ENCODE measurements at regions of chr4 and their contacts with region 1.

Region 1: GRCh38 chr4:48801734-48802133 is 21.7 kb upstream of the FRYL start:
- DNase-seq: peak in 1 of 2 donors; percentile 75
- ATAC-seq: peak; percentile 55 to 94 (median 84)
- H3K4me3 ChIP-seq: no peak overlapping the region
- H3K27ac ChIP-seq: peak overlapping the region in 9 of 10 donors; percentile 38 to 87 (median 69)
- H3K4me1 ChIP-seq: peaks cover 0 to 57% (median 20%) of the 10 kb centered on the region in 9 donors
- H3K27me3 ChIP-seq: no peaks in the 10 kb centered on the region
- CTCF ChIP-seq: no peak

Region 2: GRCh38 chr4:48681856-48682255 is 119.9 kb before region 1 on chr4:
- intact Hi-C with region 1: no loop called
- DNase-seq: no peak
- ATAC-seq: peak in 4 of 8 donors; percentile 44 to 70 (median 58)
- H3K4me3 ChIP-seq: no peak overlapping the region
- H3K27ac ChIP-seq: peak overlapping the region in 1 of 10 donors; percentile 19
- H3K4me1 ChIP-seq: peaks cover 0 to 45% (median 17%) of the 10 kb centered on the region in 9 donors
- H3K27me3 ChIP-seq: no peaks in the 10 kb centered on the region
- CTCF ChIP-seq: peak; percentile 25 to 74 (median 47)

Region 3: DNA sequence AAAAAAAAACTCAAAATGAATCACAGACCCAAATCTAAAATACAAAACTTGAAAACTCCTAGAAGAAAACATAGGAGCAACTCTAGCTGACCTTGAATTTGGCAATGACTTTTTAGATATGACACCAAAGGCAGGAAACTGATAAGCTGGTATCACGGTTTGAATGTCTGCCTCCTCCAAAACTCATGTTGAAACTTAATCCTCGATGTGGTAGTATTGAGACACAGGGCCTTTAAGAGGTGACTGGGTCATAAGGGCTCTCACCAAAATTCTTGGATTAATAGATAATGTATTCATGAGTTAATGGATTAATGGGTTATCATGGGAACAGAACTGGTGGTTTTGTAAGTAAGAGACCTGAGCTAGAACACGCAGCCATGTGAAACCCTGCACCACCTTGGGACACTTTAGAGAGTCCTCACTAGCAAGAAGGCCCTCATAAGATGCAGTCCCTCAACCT is 62.1 kb before region 1 on chr4:
- intact Hi-C with region 1: loop called in 1 of 10 experiments (anchors 2 kb)
- DNase-seq: no peak
- ATAC-seq: no peak
- H3K4me3 ChIP-seq: no peak overlapping the region
- H3K27ac ChIP-seq: no peak overlapping the region
- H3K4me1 ChIP-seq: peaks cover 0 to 42% (median 17%) of the 10 kb centered on the region in 9 donors
- H3K27me3 ChIP-seq: no peaks in the 10 kb centered on the region
- CTCF ChIP-seq: no peak

Region 4: DNA sequence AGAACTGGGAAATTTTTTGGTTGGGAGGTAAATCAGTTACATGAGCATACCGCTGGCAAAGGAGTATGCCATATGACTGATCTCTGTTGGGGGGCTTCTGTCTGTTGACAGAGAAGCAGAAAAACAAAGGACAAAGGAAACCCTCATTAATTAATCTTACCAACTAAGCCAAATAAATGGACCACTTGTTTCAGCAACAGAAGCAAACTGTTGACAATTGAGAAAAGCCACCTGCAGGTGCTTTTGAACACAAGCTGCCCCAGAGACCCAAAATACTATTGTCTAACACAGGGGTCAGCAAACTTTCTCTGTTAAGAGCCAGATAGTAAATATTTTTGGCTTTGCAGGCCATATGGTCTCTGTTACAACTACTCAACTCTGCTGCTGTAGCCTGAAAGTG is 14.7 kb before region 1 on chr4:
- intact Hi-C with region 1: no loop called
- DNase-seq: no peak
- ATAC-seq: no peak
- H3K4me3 ChIP-seq: no peak overlapping the region
- H3K27ac ChIP-seq: no peak overlapping the region
- H3K4me1 ChIP-seq: peaks cover 0 to 2% (median 0%) of the 10 kb centered on the region in 9 donors
- H3K27me3 ChIP-seq: no peaks in the 10 kb centered on the region
- CTCF ChIP-seq: no peak

Region 5: GRCh38 chr4:48906206-48907173 is 104.8 kb after region 1 on chr4 and contains the start of gene OCIAD2:
- intact Hi-C with region 1: no loop called
- DNase-seq: peak; percentile 50 to 63
- ATAC-seq: peak; percentile 81 to 92 (median 88)
- H3K4me3 ChIP-seq: peak within 1 kb of the TSS; percentile 40 to 84 (median 70)
- H3K27ac ChIP-seq: peak within 1 kb of the TSS in 9 of 10 donors; percentile 46 to 80 (median 71)
- H3K4me1 ChIP-seq: peaks cover 0 to 19% (median 12%) of the 10 kb centered on the region in 9 donors
- H3K27me3 ChIP-seq: no peaks in the 10 kb centered on the region
- CTCF ChIP-seq: peak in 4 of 9 donors; percentile 25 to 46 (median 36)
- total RNA-seq, gene OCIAD2: 11.4 to 30.2 (median 14.8) TPM

Measured in heart right ventricle (tissue), 16 donors.